IMR-90 (cell line): ENCODE measurements at regions of chr10 and their contacts with region 1.

Region 1: GRCh38 chr10:113385021-113385999 is 167.5 kb upstream of the HABP2 start:
- DNase-seq: peak; percentile 85
- ATAC-seq: peak; percentile 98
- H3K4me3 ChIP-seq: no peak overlapping the region
- H3K27ac ChIP-seq: no peak overlapping the region
- H3K4me1 ChIP-seq: peaks cover 3% of the 10 kb centered on the region; the same call in 1 of the 2 replicates
- H3K27me3 ChIP-seq: peaks cover 12% of the 10 kb centered on the region
- CTCF ChIP-seq: peak; percentile 96
- POLR2A ChIP-seq: peak; percentile 60; the same call in 1 of the 2 replicates
- RAD21 ChIP-seq: peak; percentile 99

Region 2: GRCh38 chr10:112183329-112184051 is 1201.8 kb before region 1 on chr10 and contains the start of gene GPAM:
- CTCF ChIA-PET with region 1: no interaction called
- POLR2A ChIA-PET with region 1: no interaction called
- dilution Hi-C with region 1: no loop called
- in situ Hi-C with region 1: no loop called
- intact Hi-C with region 1: loop called (anchors 10 kb)
- DNase-seq: peak; percentile 85
- ATAC-seq: peak; percentile 98
- H3K4me3 ChIP-seq: peak within 1 kb of the TSS; percentile 60
- H3K27ac ChIP-seq: peak within 1 kb of the TSS; percentile 82
- H3K4me1 ChIP-seq: 0 out of 2 replicates have a peak, but pooled peaks cover 3% of the 10 kb centered on the region
- H3K27me3 ChIP-seq: no peaks in the 10 kb centered on the region
- CTCF ChIP-seq: no peak
- POLR2A ChIP-seq: peak; percentile 68; the same call in 1 of the 2 replicates
- RAD21 ChIP-seq: 0 out of 2 replicates have a peak, but pooled peaks have one; percentile 12
- total RNA-seq, gene GPAM: 11.5 and 13.1 TPM in 2 replicates

Region 3: DNA sequence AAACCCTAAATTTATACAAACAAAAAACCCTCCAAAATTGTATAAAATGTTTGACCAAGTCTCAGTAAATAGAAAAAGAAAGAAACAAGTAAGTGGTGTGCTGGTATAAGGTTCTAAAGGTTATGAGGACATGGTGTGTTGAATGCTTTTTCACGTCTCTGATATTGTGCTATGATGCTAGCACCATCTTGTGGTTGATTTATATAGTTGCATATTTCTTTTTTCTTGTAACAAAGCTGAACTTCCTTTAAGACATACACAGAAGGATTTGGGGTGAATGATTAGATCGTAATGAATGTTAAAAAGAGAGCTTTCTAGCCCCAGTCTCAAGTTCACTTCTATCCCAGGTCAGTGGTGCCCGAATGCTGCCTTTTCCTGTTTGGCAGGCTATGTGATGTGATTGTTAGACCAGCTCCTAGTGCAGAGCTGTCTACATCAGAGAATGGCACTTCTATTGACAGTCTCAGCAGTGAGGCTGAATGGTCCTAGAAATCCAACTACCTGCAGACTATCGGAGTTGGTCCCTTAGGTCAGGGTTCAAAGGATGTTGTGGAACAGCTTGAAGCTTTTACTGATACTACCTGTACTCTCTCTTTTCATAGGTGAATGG is 913.3 kb before region 1 on chr10:
- CTCF ChIA-PET with region 1: interaction called, 14 read pairs
- POLR2A ChIA-PET with region 1: no interaction called
- dilution Hi-C with region 1: no loop called
- in situ Hi-C with region 1: loop called (anchors 10 kb)
- intact Hi-C with region 1: loop called (anchors 1 kb)
- DNase-seq: peak; percentile 68
- ATAC-seq: peak; percentile 76
- H3K4me3 ChIP-seq: no peak overlapping the region
- H3K27ac ChIP-seq: no peak overlapping the region
- H3K4me1 ChIP-seq: no peaks in the 10 kb centered on the region
- H3K27me3 ChIP-seq: no peaks in the 10 kb centered on the region
- CTCF ChIP-seq: peak; percentile 69
- POLR2A ChIP-seq: no peak
- RAD21 ChIP-seq: peak; percentile 77

Region 4: DNA sequence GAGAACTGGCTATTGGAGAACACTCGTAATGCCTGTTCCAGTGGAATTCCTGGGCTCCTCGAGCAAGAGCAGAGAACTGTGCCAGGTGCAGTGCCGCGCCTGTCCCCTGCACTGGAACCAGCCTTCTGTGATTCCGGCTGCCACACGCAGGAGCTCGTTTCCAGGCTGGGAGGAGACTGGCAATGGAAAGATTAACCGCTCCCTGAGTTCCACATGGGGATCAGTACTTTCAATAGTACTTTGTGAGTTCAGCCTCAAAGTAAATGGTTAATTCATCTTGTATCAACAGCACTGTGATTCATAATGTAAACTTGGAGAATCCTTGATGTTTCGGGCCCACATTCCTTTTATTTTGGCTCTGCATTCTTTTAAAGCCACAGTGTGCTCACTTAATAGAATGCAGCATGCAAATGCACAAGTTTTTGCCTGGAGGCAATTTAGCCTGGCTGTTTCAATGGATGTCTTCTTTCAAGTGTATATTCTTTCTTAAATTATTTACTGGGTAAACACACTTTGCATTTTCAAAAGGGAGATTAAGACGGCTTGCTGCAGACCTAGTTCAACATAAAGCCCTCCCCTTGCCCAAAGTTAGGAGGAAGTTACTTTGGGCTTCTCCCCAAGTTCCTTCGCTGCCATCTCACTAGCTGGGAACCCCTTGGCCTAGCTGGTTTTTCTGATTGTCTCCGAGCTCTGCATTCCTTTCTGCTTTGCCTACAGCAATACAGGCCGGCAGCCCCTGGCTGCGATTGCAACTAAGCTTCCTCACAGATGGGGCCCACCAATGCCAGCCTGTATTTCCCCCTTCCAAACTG is 573.4 kb before region 1 on chr10:
- CTCF ChIA-PET with region 1: no interaction called
- POLR2A ChIA-PET with region 1: no interaction called
- dilution Hi-C with region 1: no loop called
- in situ Hi-C with region 1: no loop called
- intact Hi-C with region 1: loop called (anchors 10 kb)
- DNase-seq: peak; percentile 94
- ATAC-seq: peak; percentile 85
- H3K4me3 ChIP-seq: peak overlapping the region; percentile 40
- H3K27ac ChIP-seq: peak overlapping the region; percentile 84
- H3K4me1 ChIP-seq: peaks cover 20% of the 10 kb centered on the region
- H3K27me3 ChIP-seq: no peaks in the 10 kb centered on the region
- CTCF ChIP-seq: no peak
- POLR2A ChIP-seq: no peak
- RAD21 ChIP-seq: no peak

Region 5: DNA sequence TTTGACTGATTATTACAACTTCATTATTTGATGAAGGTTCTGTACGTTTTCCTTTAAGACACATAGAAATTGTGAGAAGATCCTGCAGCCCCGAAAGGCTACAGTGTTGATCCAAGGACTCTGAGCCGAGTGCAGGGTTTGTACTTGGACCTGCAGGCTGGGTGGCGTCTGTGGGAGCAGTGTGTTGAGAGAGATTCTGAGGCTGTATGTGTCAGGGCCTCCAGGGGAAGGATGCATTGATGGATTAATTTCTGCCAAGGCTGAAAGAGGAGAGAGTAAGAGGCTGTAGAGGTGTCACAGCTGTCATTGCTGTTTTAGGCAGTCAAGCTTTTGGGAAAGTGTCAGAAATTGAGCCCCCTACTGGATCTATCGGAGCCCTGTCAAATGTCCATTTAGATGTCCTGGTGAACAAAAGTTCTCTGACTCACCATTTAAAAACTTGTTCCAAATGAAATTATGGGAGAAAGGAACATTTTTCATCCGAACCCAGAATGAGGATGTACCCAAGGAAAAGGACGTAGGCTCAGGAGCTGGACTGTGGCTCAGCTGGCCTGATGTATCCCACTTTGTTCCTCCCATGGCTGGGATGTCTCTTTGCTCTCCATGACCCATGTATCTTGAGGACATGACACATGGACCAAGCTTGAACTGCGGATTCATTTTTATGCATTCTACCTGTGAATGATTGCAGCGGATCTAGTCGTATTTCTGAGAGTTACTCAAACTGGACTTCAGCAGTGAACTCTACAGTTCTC is 333.1 kb before region 1 on chr10:
- CTCF ChIA-PET with region 1: no interaction called
- POLR2A ChIA-PET with region 1: no interaction called
- dilution Hi-C with region 1: no loop called
- in situ Hi-C with region 1: no loop called
- intact Hi-C with region 1: loop called (anchors 10 kb)
- DNase-seq: no peak
- ATAC-seq: no peak
- H3K4me3 ChIP-seq: no peak overlapping the region
- H3K27ac ChIP-seq: no peak overlapping the region
- H3K4me1 ChIP-seq: peaks cover 18% of the 10 kb centered on the region
- H3K27me3 ChIP-seq: no peaks in the 10 kb centered on the region
- CTCF ChIP-seq: peak; percentile 13; the same call in 1 of the 2 replicates
- POLR2A ChIP-seq: no peak
- RAD21 ChIP-seq: peak; percentile 17; the same call in 1 of the 2 replicates

Region 6: DNA sequence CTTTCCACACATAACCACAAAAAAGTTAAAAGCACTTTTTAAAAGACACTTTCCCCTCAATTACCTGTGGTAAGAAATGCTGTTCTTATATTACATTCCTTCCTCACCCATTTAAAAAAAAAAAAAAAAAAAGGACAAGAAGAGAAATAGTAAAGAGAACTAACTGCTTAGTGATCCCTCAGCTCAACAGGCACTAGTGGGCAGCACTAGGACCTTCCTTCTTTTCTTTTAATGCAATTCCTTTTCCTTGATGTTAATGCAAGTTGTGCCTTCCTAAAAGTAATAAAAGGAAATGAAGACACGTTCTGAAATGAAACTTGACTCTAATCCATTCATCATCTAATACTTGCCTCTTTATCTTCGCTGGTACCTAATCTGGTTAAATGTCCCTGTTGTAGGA is 245.6 kb before region 1 on chr10:
- CTCF ChIA-PET with region 1: no interaction called
- POLR2A ChIA-PET with region 1: no interaction called
- dilution Hi-C with region 1: no loop called
- in situ Hi-C with region 1: loop called (anchors 10 kb)
- intact Hi-C with region 1: loop called (anchors 2 kb)
- DNase-seq: peak; percentile 32
- ATAC-seq: peak; percentile 56
- H3K4me3 ChIP-seq: no peak overlapping the region
- H3K27ac ChIP-seq: no peak overlapping the region
- H3K4me1 ChIP-seq: 0 out of 2 replicates have a peak, but pooled peaks cover 2% of the 10 kb centered on the region
- H3K27me3 ChIP-seq: no peaks in the 10 kb centered on the region
- CTCF ChIP-seq: peak; percentile 38
- POLR2A ChIP-seq: no peak
- RAD21 ChIP-seq: no peak; the same call in 1 of the 2 replicates